CD8-positive, alpha-beta T cell (primary cell): ENCODE measurements at regions of chr1 and their contacts with region 1.

Region 1: GRCh38 chr1:155250633-155251449 is 4.4 kb downstream of the ENTREP3 start:
- DNase-seq: peak; percentile 92 to 99 (median 95)
- ATAC-seq: peak; percentile 96
- H3K4me3 ChIP-seq: peak overlapping the region; percentile 56 to 71
- H3K4me3 Mint-ChIP-seq: peak overlapping the region; percentile 77
- H3K27ac ChIP-seq: peak overlapping the region; percentile 35 to 56
- H3K27ac Mint-ChIP-seq: no peak overlapping the region
- H3K4me1 ChIP-seq: peaks cover 27% of the 10 kb centered on the region
- H3K4me1 Mint-ChIP-seq: peaks cover 27% of the 10 kb centered on the region
- H3K27me3 ChIP-seq: no peaks in the 10 kb centered on the region
- H3K27me3 Mint-ChIP-seq: no peaks in the 10 kb centered on the region
- CTCF ChIP-seq: peak; percentile 98

Region 2: GRCh38 chr1:155208541-155209311 is 42.1 kb before region 1 on chr1 and contains the start of gene MTX1:
- CTCF ChIA-PET with region 1: interaction called, 12 read pairs
- POLR2A ChIA-PET with region 1: no interaction called
- intact Hi-C with region 1: no loop called
- DNase-seq: peak; percentile 77 to 94 (median 88)
- ATAC-seq: peak; percentile 84
- H3K4me3 ChIP-seq: peak within 1 kb of the TSS; percentile 79 to 86
- H3K4me3 Mint-ChIP-seq: peak within 1 kb of the TSS; percentile 86
- H3K27ac ChIP-seq: peak within 1 kb of the TSS; percentile 99
- H3K27ac Mint-ChIP-seq: peak within 1 kb of the TSS; percentile 95
- H3K4me1 ChIP-seq: peaks cover 22% of the 10 kb centered on the region
- H3K4me1 Mint-ChIP-seq: peaks cover 20% of the 10 kb centered on the region
- H3K27me3 ChIP-seq: no peaks in the 10 kb centered on the region
- H3K27me3 Mint-ChIP-seq: no peaks in the 10 kb centered on the region
- CTCF ChIP-seq: no peak
- total RNA-seq, gene MTX1: 24.4 to 25.8 TPM

Region 3: DNA sequence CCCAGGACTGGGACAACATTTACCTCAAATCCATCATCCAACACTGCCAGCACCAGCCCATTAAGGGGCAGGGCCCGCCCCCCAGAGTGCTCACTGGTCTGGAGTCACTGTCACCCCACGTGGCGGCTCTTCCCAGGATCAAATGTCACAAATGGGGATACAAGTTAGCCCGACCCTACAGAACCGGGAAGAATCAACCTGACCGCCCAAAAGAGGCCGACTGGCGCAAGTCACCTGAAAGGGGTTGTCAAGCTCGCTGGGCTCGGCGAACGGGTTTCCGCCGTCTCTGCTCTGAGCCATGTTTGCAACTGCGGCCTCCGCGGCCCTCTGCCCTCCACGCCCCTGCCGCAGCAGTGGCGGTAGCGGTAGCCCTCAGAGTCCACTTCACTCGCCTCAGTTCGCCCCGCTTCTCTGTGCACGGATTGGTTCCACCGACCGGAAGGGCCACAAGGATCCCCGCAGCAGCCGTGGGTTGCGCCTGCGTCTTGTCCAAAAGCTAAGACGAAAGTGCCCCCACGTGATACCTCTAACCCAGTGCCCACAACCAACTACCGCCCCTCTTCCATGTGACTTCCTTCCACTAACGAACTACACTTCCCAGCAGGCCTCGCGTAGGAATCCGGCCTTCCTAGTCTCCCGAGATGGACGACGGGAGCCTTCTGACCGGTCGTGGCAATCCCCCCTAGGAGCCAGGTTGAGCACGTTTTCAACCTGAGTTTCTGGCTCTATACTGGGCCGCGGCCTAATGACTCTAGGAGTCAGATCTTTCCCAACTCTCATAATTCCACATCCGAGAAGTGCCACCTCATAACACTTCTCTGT is 11.2 kb after region 1 on chr1 and contains the start of gene SCAMP3:
- CTCF ChIA-PET with region 1: interaction called, 121 read pairs
- POLR2A ChIA-PET with region 1: interaction called, 18 read pairs
- intact Hi-C with region 1: no loop called
- DNase-seq: peak; percentile 61 to 96 (median 84)
- ATAC-seq: peak; percentile 95
- H3K4me3 ChIP-seq: peak within 1 kb of the TSS; percentile 79 to 86
- H3K4me3 Mint-ChIP-seq: peak within 1 kb of the TSS; percentile 100
- H3K27ac ChIP-seq: peak within 1 kb of the TSS; percentile 72 to 85
- H3K27ac Mint-ChIP-seq: peak within 1 kb of the TSS; percentile 97
- H3K4me1 ChIP-seq: peaks cover 16% of the 10 kb centered on the region
- H3K4me1 Mint-ChIP-seq: peaks cover 29% of the 10 kb centered on the region
- H3K27me3 ChIP-seq: no peaks in the 10 kb centered on the region
- H3K27me3 Mint-ChIP-seq: no peaks in the 10 kb centered on the region
- CTCF ChIP-seq: no peak
- total RNA-seq, gene SCAMP3: 47.5 to 48.5 TPM

Region 4: GRCh38 chr1:155308493-155309422 is 57.9 kb after region 1 on chr1 and contains the start of gene FDPS:
- CTCF ChIA-PET with region 1: interaction called, 9 read pairs
- POLR2A ChIA-PET with region 1: interaction called, 8 read pairs
- intact Hi-C with region 1: loop called (anchors 1 to 2 kb)
- DNase-seq: peak; percentile 92 to 100 (median 96)
- ATAC-seq: peak; percentile 97
- H3K4me3 ChIP-seq: peak within 1 kb of the TSS; percentile 73 to 97
- H3K4me3 Mint-ChIP-seq: peak within 1 kb of the TSS; percentile 94
- H3K27ac ChIP-seq: peak within 1 kb of the TSS; percentile 70 to 91
- H3K27ac Mint-ChIP-seq: peak within 1 kb of the TSS; percentile 93
- H3K4me1 ChIP-seq: peaks cover 18% of the 10 kb centered on the region
- H3K4me1 Mint-ChIP-seq: peaks cover 27% of the 10 kb centered on the region
- H3K27me3 ChIP-seq: no peaks in the 10 kb centered on the region
- H3K27me3 Mint-ChIP-seq: no peaks in the 10 kb centered on the region
- CTCF ChIP-seq: no peak
- total RNA-seq, gene FDPS: 38.2 to 38.7 TPM

Region 5: GRCh38 chr1:155329971-155330598 is 79.2 kb after region 1 on chr1:
- CTCF ChIA-PET with region 1: interaction called, 36 read pairs
- POLR2A ChIA-PET with region 1: no interaction called
- intact Hi-C with region 1: no loop called
- DNase-seq: peak in 1 of 9 experiments; percentile 38
- ATAC-seq: no peak
- H3K4me3 ChIP-seq: no peak overlapping the region
- H3K4me3 Mint-ChIP-seq: no peak overlapping the region
- H3K27ac ChIP-seq: no peak overlapping the region
- H3K27ac Mint-ChIP-seq: no peak overlapping the region
- H3K4me1 ChIP-seq: peaks cover 6% of the 10 kb centered on the region
- H3K4me1 Mint-ChIP-seq: peaks cover 9% of the 10 kb centered on the region
- H3K27me3 ChIP-seq: no peaks in the 10 kb centered on the region
- H3K27me3 Mint-ChIP-seq: no peaks in the 10 kb centered on the region
- CTCF ChIP-seq: no peak

Region 6: GRCh38 chr1:155504207-155504606 is 253.4 kb after region 1 on chr1:
- CTCF ChIA-PET with region 1: interaction called, 11 read pairs
- POLR2A ChIA-PET with region 1: no interaction called
- intact Hi-C with region 1: no loop called
- DNase-seq: peak in 2 of 9 experiments; percentile 32 to 49
- ATAC-seq: no peak
- H3K4me3 ChIP-seq: no peak overlapping the region
- H3K4me3 Mint-ChIP-seq: no peak overlapping the region
- H3K27ac ChIP-seq: no peak overlapping the region
- H3K27ac Mint-ChIP-seq: no peak overlapping the region
- H3K4me1 ChIP-seq: peaks cover 19% of the 10 kb centered on the region
- H3K4me1 Mint-ChIP-seq: peaks cover 44% of the 10 kb centered on the region
- H3K27me3 ChIP-seq: no peaks in the 10 kb centered on the region
- H3K27me3 Mint-ChIP-seq: no peaks in the 10 kb centered on the region
- CTCF ChIP-seq: peak; percentile 29

Region 7: DNA sequence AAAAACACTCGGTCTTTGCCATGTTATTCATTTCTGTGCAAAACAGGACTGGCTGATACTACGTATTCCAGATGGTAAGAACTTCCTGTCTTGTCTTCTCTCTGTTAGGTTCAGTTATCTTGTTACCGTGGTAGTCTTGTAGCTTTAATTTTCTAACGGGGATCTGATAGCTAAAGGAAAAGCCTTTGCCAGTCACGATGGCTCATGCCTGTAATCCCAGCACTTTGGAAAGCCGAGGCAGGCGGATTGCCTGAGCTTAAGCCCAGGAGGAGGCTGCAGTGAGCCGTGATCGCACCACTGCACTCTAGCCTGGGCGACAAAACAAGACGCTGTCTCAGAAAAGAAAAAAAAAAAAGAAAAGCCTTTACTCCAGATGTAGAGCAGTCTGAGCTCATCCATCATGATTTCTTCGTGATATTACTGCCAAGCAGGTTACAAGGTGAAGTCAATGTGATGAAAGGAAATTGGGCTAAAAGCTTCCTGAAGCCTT is 348.0 kb after region 1 on chr1:
- CTCF ChIA-PET with region 1: interaction called, 56 read pairs
- POLR2A ChIA-PET with region 1: no interaction called
- intact Hi-C with region 1: no loop called
- DNase-seq: peak in 2 of 9 experiments; percentile 29 to 50
- ATAC-seq: peak; percentile 73
- H3K4me3 ChIP-seq: peak overlapping the region; percentile 10 to 11
- H3K4me3 Mint-ChIP-seq: peak overlapping the region; percentile 84
- H3K27ac ChIP-seq: no peak overlapping the region
- H3K27ac Mint-ChIP-seq: peak overlapping the region; percentile 94
- H3K4me1 ChIP-seq: no peaks in the 10 kb centered on the region
- H3K4me1 Mint-ChIP-seq: peaks cover 10% of the 10 kb centered on the region
- H3K27me3 ChIP-seq: no peaks in the 10 kb centered on the region
- H3K27me3 Mint-ChIP-seq: no peaks in the 10 kb centered on the region
- CTCF ChIP-seq: no peak